ENCODE measurements at regions of chr18 and their contacts with region 1.

Region 1: DNA sequence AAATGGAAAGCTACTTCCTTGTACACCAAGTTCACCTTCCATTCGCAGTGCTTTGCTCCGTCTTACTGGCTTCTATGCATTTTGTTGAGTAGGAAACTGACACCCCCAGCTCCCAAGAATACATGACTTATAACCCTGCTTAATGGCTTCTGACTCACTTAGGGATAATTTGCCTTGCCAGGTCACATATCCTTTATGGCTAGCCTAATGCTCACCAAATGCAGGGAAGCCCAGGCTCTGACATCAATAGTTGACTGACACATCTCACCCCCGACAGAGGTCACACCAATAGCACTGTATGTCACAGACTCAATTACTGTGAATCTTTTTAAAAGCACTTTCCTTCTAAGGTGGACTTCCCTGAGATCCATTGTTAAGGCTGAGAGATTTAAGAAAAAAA is 147.2 kb downstream of the DTNA start:
- DNase-seq: no peak

Region 2: GRCh38 chr18:34909637-34910364 is 52.5 kb after region 1 on chr18:
- intact Hi-C with region 1: loop called in 1 of 2 experiments (anchors 5 kb)
- DNase-seq: no peak

Region 3: GRCh38 chr18:34947711-34948125 is 90.4 kb after region 1 on chr18:
- intact Hi-C with region 1: no loop called
- DNase-seq: no peak